CD4-positive, alpha-beta memory T cell (primary cell): ENCODE measurements at regions of chr10 and their contacts with region 1.

Region 1: DNA sequence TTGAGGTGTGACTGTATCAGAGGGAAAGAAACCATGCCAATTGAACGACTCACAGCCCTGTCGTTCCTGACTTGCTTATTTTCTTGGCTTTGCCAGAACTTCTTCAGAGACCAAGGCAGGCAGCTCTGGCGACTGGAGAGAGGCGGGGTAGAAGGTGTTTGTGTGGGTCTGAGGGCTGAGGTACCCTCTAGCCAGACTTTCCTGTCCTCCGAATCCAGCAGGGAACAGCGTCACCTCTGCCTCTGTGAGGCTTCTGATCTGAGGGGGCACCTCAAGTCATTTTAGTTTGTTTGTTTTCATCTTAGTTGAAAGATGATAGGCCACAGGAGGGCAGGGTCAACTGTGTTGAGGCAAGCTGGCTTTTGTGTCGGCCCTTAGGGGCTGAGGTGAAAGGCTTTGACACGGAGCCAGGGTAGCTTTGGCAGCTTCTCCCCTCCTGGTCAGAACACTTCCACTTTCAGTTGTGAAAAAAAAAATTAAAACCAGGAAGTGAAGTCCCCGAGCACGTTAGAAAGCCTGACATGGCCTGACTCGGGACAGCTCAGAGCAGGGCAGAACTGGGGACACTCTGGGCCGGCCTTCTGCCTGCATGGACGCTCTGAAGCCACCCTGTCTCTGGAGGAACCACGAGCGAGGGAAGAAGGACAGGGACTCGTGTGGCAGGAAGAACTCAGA is 1.9 kb downstream of the ACSL5 start:
- DNase-seq: peak; percentile 56 to 72 (median 70)
- H3K4me3 ChIP-seq: peak overlapping the region; percentile 60 to 99
- H3K4me3 Mint-ChIP-seq: peak overlapping the region; percentile 97 to 100 (median 100)
- H3K27ac ChIP-seq: peak overlapping the region; percentile 97
- H3K27ac Mint-ChIP-seq: peak overlapping the region; percentile 95 to 100 (median 100)
- H3K4me1 ChIP-seq: peaks cover 53% of the 10 kb centered on the region
- H3K4me1 Mint-ChIP-seq: peaks cover 47 to 76% (median 61%) of the 10 kb centered on the region in 4 donors
- H3K27me3 ChIP-seq: no peaks in the 10 kb centered on the region
- H3K27me3 Mint-ChIP-seq: no peaks in the 10 kb centered on the region

Region 2: GRCh38 chr10:112344261-112344660 is 31.6 kb before region 1 on chr10:
- CTCF ChIA-PET with region 1: interaction called, 4 read pairs
- POLR2A ChIA-PET with region 1: no interaction called
- intact Hi-C with region 1: loop called (anchors 5 kb)
- DNase-seq: no peak
- H3K4me3 ChIP-seq: no peak overlapping the region
- H3K4me3 Mint-ChIP-seq: no peak overlapping the region
- H3K27ac ChIP-seq: no peak overlapping the region
- H3K27ac Mint-ChIP-seq: no peak overlapping the region
- H3K4me1 ChIP-seq: no peaks in the 10 kb centered on the region
- H3K4me1 Mint-ChIP-seq: no peaks in the 10 kb centered on the region
- H3K27me3 ChIP-seq: no peaks in the 10 kb centered on the region
- H3K27me3 Mint-ChIP-seq: no peaks in the 10 kb centered on the region

Region 3: GRCh38 chr10:112389147-112389822 is 13.4 kb after region 1 on chr10:
- CTCF ChIA-PET with region 1: interaction called, 22 read pairs
- POLR2A ChIA-PET with region 1: interaction called, 60 read pairs
- intact Hi-C with region 1: loop called (anchors 1 kb)
- DNase-seq: peak; percentile 48 to 85 (median 69)
- H3K4me3 ChIP-seq: no peak overlapping the region
- H3K4me3 Mint-ChIP-seq: peak overlapping the region in 7 of 8 donors; percentile 22 to 75 (median 52)
- H3K27ac ChIP-seq: peak overlapping the region; percentile 64
- H3K27ac Mint-ChIP-seq: peak overlapping the region; percentile 82 to 92 (median 88)
- H3K4me1 ChIP-seq: peaks cover 42% of the 10 kb centered on the region
- H3K4me1 Mint-ChIP-seq: peaks cover 52 to 77% (median 62%) of the 10 kb centered on the region in 4 donors
- H3K27me3 ChIP-seq: no peaks in the 10 kb centered on the region
- H3K27me3 Mint-ChIP-seq: no peaks in the 10 kb centered on the region

Region 4: GRCh38 chr10:112434988-112435619 is 59.2 kb after region 1 on chr10:
- CTCF ChIA-PET with region 1: interaction called, 16 read pairs
- POLR2A ChIA-PET with region 1: interaction called, 4 read pairs
- intact Hi-C with region 1: no loop called
- DNase-seq: peak in 3 of 5 donors; percentile 13 to 28 (median 17)
- H3K4me3 ChIP-seq: no peak overlapping the region
- H3K4me3 Mint-ChIP-seq: no peak overlapping the region
- H3K27ac ChIP-seq: no peak overlapping the region
- H3K27ac Mint-ChIP-seq: peak overlapping the region in 1 of 7 donors; percentile 73
- H3K4me1 ChIP-seq: no peaks in the 10 kb centered on the region
- H3K4me1 Mint-ChIP-seq: peaks cover 0 to 3% (median 0%) of the 10 kb centered on the region in 4 donors
- H3K27me3 ChIP-seq: no peaks in the 10 kb centered on the region
- H3K27me3 Mint-ChIP-seq: no peaks in the 10 kb centered on the region

Region 5: DNA sequence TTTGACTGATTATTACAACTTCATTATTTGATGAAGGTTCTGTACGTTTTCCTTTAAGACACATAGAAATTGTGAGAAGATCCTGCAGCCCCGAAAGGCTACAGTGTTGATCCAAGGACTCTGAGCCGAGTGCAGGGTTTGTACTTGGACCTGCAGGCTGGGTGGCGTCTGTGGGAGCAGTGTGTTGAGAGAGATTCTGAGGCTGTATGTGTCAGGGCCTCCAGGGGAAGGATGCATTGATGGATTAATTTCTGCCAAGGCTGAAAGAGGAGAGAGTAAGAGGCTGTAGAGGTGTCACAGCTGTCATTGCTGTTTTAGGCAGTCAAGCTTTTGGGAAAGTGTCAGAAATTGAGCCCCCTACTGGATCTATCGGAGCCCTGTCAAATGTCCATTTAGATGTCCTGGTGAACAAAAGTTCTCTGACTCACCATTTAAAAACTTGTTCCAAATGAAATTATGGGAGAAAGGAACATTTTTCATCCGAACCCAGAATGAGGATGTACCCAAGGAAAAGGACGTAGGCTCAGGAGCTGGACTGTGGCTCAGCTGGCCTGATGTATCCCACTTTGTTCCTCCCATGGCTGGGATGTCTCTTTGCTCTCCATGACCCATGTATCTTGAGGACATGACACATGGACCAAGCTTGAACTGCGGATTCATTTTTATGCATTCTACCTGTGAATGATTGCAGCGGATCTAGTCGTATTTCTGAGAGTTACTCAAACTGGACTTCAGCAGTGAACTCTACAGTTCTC is 676.4 kb after region 1 on chr10:
- CTCF ChIA-PET with region 1: no interaction called
- POLR2A ChIA-PET with region 1: no interaction called
- intact Hi-C with region 1: no loop called
- DNase-seq: no peak
- H3K4me3 ChIP-seq: no peak overlapping the region
- H3K4me3 Mint-ChIP-seq: no peak overlapping the region
- H3K27ac ChIP-seq: no peak overlapping the region
- H3K27ac Mint-ChIP-seq: peak overlapping the region in 1 of 7 donors; percentile 77
- H3K4me1 ChIP-seq: peaks cover 20% of the 10 kb centered on the region
- H3K4me1 Mint-ChIP-seq: peaks cover 17 to 29% (median 22%) of the 10 kb centered on the region in 4 donors
- H3K27me3 ChIP-seq: no peaks in the 10 kb centered on the region
- H3K27me3 Mint-ChIP-seq: peaks cover 3 to 8% of the 10 kb centered on the region in 2 donors